Gastrocnemius medialis (tissue), 4 donors: ENCODE measurements at regions of chr15 and their contacts with region 1.

Region 1: GRCh38 chr15:51971375-51972133 is at the start of gene LEO1:
- DNase-seq: peak; percentile 88 to 91
- ATAC-seq: peak; percentile 97 to 99
- H3K4me3 ChIP-seq: peak within 1 kb of the TSS; percentile 71 to 95 (median 90)
- H3K27ac ChIP-seq: peak within 1 kb of the TSS; percentile 82 to 91 (median 86)
- H3K4me1 ChIP-seq: peaks cover 12 to 15% of the 10 kb centered on the region in 2 donors
- H3K27me3 ChIP-seq: no peaks in the 10 kb centered on the region
- CTCF ChIP-seq: peak; percentile 19 to 50 (median 32)
- POLR2A ChIP-seq: peak in 1 of 2 donors; percentile 10
- total RNA-seq, gene LEO1: 6.7 to 14.8 (median 11.7) TPM

Region 2: GRCh38 chr15:51405693-51406523 is 565.6 kb before region 1 on chr15:
- in situ Hi-C with region 1: no loop called
- intact Hi-C with region 1: no loop called
- DNase-seq: no peak
- ATAC-seq: no peak
- H3K4me3 ChIP-seq: no peak overlapping the region
- H3K27ac ChIP-seq: no peak overlapping the region
- H3K4me1 ChIP-seq: no peaks in the 10 kb centered on the region
- H3K27me3 ChIP-seq: no peaks in the 10 kb centered on the region
- CTCF ChIP-seq: no peak
- POLR2A ChIP-seq: no peak

Region 3: DNA sequence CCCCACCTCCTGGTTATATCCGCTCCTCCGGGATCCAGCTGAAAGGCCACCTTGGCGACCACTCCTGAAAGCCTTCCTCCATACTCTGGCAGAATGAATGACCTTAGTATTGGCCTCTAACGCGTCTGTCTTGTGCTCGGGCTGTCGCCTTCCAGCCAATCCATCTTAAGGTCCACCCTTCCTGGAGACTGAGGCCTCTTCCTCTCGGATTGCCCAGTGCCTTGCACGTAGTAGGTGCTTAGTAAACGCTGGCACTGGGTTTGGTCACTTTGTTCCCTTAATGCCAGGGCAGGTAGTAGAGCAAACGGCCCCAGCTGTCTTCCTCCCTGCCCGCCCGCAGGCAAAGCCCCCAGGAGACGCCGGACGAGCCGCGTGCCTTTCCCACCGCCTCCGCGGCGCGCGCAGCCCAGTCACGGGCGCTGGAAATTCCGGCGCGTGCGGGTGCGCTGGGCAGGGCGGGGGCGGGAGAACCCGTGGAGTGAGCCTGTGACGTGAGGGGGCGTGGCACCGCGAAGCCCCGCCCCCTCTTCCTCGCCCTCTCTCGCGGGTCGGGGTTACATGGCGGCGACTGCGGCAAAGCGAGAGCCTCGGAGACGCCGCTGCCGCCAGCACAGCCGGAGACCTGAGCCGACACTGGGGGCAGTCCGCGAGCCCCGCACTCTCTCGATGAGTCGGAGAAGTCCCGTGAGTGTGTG is 47.3 kb after region 1 on chr15 and contains the start of gene MAPK6:
- in situ Hi-C with region 1: no loop called
- intact Hi-C with region 1: loop called (anchors 2 kb)
- DNase-seq: peak; percentile 88 to 91
- ATAC-seq: peak; percentile 79 to 83
- H3K4me3 ChIP-seq: peak within 1 kb of the TSS; percentile 66 to 80 (median 71)
- H3K27ac ChIP-seq: peak within 1 kb of the TSS; percentile 92 to 99 (median 97)
- H3K4me1 ChIP-seq: peaks cover 28 to 32% of the 10 kb centered on the region in 2 donors
- H3K27me3 ChIP-seq: no peaks in the 10 kb centered on the region
- CTCF ChIP-seq: peak in 1 of 5 experiments; percentile 5
- POLR2A ChIP-seq: peak; percentile 89 to 92
- total RNA-seq, gene MAPK6: 47.6 to 84.4 (median 56.4) TPM

Region 4: DNA sequence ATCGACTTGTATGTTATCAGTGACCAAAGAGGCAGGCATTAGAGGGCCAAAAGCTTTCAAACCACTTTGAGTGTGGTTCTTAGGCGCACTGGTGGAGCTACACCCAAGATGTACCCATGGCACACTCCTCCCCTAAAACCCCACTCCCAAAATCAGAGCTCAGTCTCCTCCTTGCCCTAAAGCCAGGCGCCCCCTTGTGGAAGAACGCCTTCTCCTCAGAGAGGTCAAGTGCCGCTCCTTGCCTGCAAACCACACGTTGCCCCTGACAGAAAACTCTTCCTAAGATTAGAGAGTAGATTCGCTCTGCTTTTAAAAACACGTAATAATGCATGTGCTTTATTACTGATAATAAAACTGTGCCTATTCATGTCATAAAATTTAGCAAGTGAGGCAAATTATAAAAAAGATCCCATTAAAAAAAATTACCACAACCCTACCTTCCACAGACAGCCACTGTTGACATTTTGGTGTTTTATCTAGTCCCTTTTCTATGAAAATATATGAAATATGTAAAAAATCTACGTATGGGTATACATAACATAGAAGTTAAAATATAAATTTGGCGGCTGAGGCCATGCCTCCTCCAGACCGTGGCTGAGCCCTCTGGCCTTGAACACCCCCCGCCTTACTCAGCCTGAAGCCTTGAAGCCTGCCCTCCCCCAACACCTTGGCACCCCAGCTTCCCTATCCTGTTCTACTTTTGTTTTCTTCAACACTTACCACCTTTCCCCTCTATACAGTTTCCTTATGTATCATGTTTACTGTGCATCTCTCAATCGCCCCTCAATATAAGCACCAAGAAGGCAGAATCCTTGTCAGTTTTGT is 107.5 kb after region 1 on chr15:
- in situ Hi-C with region 1: loop called in 3 of 4 experiments (anchors 5 to 25 kb)
- intact Hi-C with region 1: loop called (anchors 1 kb)
- DNase-seq: peak; percentile 55 to 67
- ATAC-seq: peak; percentile 60 to 87
- H3K4me3 ChIP-seq: no peak overlapping the region
- H3K27ac ChIP-seq: no peak overlapping the region
- H3K4me1 ChIP-seq: no peaks in the 10 kb centered on the region
- H3K27me3 ChIP-seq: no peaks in the 10 kb centered on the region
- CTCF ChIP-seq: peak; percentile 64 to 85 (median 78)
- POLR2A ChIP-seq: no peak

Region 5: DNA sequence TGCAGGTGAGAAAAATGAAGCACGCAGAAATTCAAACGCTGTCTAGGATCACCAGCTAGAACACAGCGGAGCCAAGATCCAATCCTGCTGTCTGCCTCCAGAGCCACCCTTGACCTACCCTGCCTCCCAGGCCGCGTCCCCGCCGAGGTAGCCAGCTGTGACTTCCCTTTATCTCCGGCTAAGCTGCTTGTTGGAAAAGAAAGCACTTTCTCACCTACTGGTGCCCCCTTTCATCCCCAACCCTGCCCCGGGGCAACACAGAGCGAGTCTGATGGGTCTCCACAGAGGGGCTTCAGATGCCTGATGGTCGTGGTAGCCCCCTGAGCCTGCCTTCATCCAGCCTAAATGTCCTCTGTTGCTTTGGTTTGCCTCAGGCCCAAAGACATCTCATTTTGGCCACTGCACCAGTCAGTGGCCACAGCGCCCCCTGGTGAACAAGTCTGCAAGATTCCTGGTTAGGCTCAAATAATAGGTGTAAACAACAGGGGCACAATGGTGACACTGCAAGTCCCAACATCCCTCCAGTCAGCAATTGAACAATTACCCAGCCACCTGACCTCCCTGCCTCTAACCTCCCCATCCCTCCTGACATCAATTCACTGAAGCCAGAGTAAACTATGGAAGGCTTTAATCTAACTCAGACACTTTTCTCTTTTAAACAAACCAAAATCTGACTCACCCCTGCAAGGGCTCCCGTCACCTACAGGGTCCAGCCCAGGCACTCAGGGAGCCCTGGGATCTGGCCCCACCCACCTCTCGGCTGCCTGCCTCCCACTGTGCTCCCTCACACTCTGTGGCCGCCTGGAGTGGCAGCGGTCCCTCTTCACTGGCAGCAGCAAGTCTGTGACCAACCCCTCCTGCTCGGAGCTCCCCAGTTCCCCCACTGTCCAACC is 168.3 kb after region 1 on chr15:
- in situ Hi-C with region 1: no loop called
- intact Hi-C with region 1: loop called (anchors 5 kb)
- DNase-seq: peak; percentile 29 to 44
- ATAC-seq: peak in 1 of 2 donors; percentile 66
- H3K4me3 ChIP-seq: no peak overlapping the region
- H3K27ac ChIP-seq: no peak overlapping the region
- H3K4me1 ChIP-seq: peaks cover 0 to 4% of the 10 kb centered on the region in 2 donors
- H3K27me3 ChIP-seq: no peaks in the 10 kb centered on the region
- CTCF ChIP-seq: peak; percentile 45 to 72 (median 67)
- POLR2A ChIP-seq: no peak